Caco-2 (cell line): ENCODE measurements at regions of chr9 and their contacts with region 1.

Region 1: GRCh38 chr9:101324245-101324804 is 60.5 kb downstream of the BAAT start:
- DNase-seq: peak in 1 of 2 experiments; percentile 13
- H3K4me3 ChIP-seq: no peak overlapping the region
- H3K4me3 Mint-ChIP-seq: peak overlapping the region; percentile 11
- H3K27ac Mint-ChIP-seq: peak overlapping the region; percentile 15
- H3K4me1 ChIP-seq: peaks cover 52% of the 10 kb centered on the region
- H3K4me1 Mint-ChIP-seq: peaks cover 7% of the 10 kb centered on the region
- H3K27me3 ChIP-seq: no peaks in the 10 kb centered on the region
- H3K27me3 Mint-ChIP-seq: no peaks in the 10 kb centered on the region
- CTCF ChIP-seq: no peak

Region 2: GRCh38 chr9:101299901-101300300 is 24.4 kb before region 1 on chr9:
- CTCF ChIA-PET with region 1: no interaction called
- POLR2A ChIA-PET with region 1: no interaction called
- intact Hi-C with region 1: no loop called
- DNase-seq: no peak
- H3K4me3 ChIP-seq: no peak overlapping the region
- H3K4me3 Mint-ChIP-seq: no peak overlapping the region
- H3K27ac Mint-ChIP-seq: no peak overlapping the region
- H3K4me1 ChIP-seq: no peaks in the 10 kb centered on the region
- H3K4me1 Mint-ChIP-seq: no peaks in the 10 kb centered on the region
- H3K27me3 ChIP-seq: no peaks in the 10 kb centered on the region
- H3K27me3 Mint-ChIP-seq: peaks cover 5% of the 10 kb centered on the region
- CTCF ChIP-seq: no peak

Region 3: DNA sequence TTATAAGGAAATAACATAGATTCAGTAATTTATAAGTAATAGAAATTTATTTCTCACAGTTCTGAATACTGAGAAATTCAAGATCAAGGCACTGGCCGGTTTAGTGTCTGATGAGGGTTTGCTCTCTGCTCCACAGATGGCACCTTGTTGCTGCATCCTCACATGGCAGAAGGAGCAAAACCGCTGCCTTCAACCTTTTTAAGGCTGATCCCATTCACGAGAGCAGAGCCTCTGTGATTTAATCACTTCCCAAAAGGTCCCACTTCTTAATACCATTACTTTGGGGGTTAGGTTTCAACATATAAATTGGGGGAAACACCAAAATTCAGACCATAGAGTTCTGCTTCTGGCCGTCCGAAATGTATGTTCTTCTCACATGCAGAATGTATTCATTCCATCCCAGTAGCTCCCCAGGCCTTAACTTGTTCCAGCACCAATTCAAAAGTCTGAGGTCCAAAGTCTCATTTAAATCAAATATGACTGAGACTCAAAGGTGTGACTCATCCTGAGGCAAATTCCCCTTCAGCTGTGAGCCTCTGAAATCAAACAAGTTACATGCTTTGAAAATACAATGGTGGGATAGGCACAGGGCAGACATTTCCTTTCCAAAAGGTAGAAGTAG is 29.9 kb after region 1 on chr9:
- CTCF ChIA-PET with region 1: no interaction called
- POLR2A ChIA-PET with region 1: no interaction called
- intact Hi-C with region 1: loop called (anchors 1 kb)
- DNase-seq: peak; percentile 71 to 74
- H3K4me3 ChIP-seq: no peak overlapping the region
- H3K4me3 Mint-ChIP-seq: peak overlapping the region; percentile 63
- H3K27ac Mint-ChIP-seq: peak overlapping the region; percentile 87
- H3K4me1 ChIP-seq: peaks cover 39% of the 10 kb centered on the region
- H3K4me1 Mint-ChIP-seq: peaks cover 19% of the 10 kb centered on the region
- H3K27me3 ChIP-seq: no peaks in the 10 kb centered on the region
- H3K27me3 Mint-ChIP-seq: no peaks in the 10 kb centered on the region
- CTCF ChIP-seq: no peak

Region 4: GRCh38 chr9:101366038-101366756 is 41.9 kb after region 1 on chr9:
- CTCF ChIA-PET with region 1: no interaction called
- POLR2A ChIA-PET with region 1: no interaction called
- intact Hi-C with region 1: loop called (anchors 1 kb)
- DNase-seq: peak in 1 of 2 experiments; percentile 56
- H3K4me3 ChIP-seq: peak overlapping the region; percentile 18; the same call in 1 of the 2 replicates
- H3K4me3 Mint-ChIP-seq: peak overlapping the region; percentile 67
- H3K27ac Mint-ChIP-seq: peak overlapping the region; percentile 30
- H3K4me1 ChIP-seq: peaks cover 41% of the 10 kb centered on the region
- H3K4me1 Mint-ChIP-seq: peaks cover 22% of the 10 kb centered on the region
- H3K27me3 ChIP-seq: no peaks in the 10 kb centered on the region
- H3K27me3 Mint-ChIP-seq: no peaks in the 10 kb centered on the region
- CTCF ChIP-seq: no peak

Region 5: DNA sequence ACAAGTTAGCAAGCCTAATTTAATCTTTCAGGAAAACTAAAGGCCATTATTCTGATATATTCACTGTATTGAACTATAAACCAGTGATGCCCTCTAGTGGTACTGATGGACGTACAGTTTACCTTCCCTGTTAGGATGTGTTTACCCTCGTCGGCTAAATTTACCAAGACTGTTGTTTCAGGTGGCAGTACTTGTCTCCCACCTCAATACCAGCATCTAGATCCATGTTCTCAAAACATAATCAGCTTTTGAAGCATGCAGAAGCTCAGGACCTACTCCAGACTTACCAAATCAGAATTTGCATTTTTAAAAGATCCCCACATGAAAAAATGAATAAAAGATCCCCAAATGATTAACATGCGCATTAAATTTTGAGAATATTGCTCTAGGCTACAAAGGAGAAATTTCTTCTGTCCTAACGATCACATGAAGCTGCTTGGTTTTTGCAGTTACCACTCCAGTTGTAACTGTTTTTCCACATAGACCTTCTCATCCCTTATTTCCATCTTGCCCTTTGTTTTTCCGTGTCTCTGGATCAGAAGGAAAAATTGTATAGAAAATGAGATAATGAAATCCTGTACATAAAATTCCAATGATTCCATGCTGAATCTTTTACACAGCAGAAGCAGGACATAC is 63.7 kb after region 1 on chr9:
- CTCF ChIA-PET with region 1: no interaction called
- POLR2A ChIA-PET with region 1: no interaction called
- intact Hi-C with region 1: loop called (anchors 1 kb)
- DNase-seq: peak; percentile 36 to 46
- H3K4me3 ChIP-seq: no peak overlapping the region
- H3K4me3 Mint-ChIP-seq: no peak overlapping the region
- H3K27ac Mint-ChIP-seq: no peak overlapping the region
- H3K4me1 ChIP-seq: 0 out of 2 replicates have a peak, but pooled peaks cover 3% of the 10 kb centered on the region
- H3K4me1 Mint-ChIP-seq: peaks cover 13% of the 10 kb centered on the region
- H3K27me3 ChIP-seq: no peaks in the 10 kb centered on the region
- H3K27me3 Mint-ChIP-seq: no peaks in the 10 kb centered on the region
- CTCF ChIP-seq: peak; percentile 43 to 46

Region 6: GRCh38 chr9:101449140-101449721 is 124.9 kb after region 1 on chr9:
- CTCF ChIA-PET with region 1: no interaction called
- POLR2A ChIA-PET with region 1: no interaction called
- intact Hi-C with region 1: loop called (anchors 5 kb)
- DNase-seq: peak; percentile 88 to 90
- H3K4me3 ChIP-seq: peak overlapping the region; percentile 59
- H3K4me3 Mint-ChIP-seq: peak overlapping the region; percentile 72
- H3K27ac Mint-ChIP-seq: peak overlapping the region; percentile 70
- H3K4me1 ChIP-seq: peaks cover 6% of the 10 kb centered on the region; the same call in 1 of the 2 replicates
- H3K4me1 Mint-ChIP-seq: peaks cover 16% of the 10 kb centered on the region
- H3K27me3 ChIP-seq: no peaks in the 10 kb centered on the region
- H3K27me3 Mint-ChIP-seq: no peaks in the 10 kb centered on the region
- CTCF ChIP-seq: peak; percentile 59 to 82

Region 7: GRCh38 chr9:101778332-101778731 is 454.0 kb after region 1 on chr9:
- CTCF ChIA-PET with region 1: no interaction called
- POLR2A ChIA-PET with region 1: no interaction called
- intact Hi-C with region 1: no loop called
- DNase-seq: no peak
- H3K4me3 ChIP-seq: no peak overlapping the region
- H3K4me3 Mint-ChIP-seq: no peak overlapping the region
- H3K27ac Mint-ChIP-seq: no peak overlapping the region
- H3K4me1 ChIP-seq: no peaks in the 10 kb centered on the region
- H3K4me1 Mint-ChIP-seq: no peaks in the 10 kb centered on the region
- H3K27me3 ChIP-seq: no peaks in the 10 kb centered on the region
- H3K27me3 Mint-ChIP-seq: no peaks in the 10 kb centered on the region
- CTCF ChIP-seq: no peak